ENCODE measurements at regions of chr14 and their contacts with region 1.

Region 1: DNA sequence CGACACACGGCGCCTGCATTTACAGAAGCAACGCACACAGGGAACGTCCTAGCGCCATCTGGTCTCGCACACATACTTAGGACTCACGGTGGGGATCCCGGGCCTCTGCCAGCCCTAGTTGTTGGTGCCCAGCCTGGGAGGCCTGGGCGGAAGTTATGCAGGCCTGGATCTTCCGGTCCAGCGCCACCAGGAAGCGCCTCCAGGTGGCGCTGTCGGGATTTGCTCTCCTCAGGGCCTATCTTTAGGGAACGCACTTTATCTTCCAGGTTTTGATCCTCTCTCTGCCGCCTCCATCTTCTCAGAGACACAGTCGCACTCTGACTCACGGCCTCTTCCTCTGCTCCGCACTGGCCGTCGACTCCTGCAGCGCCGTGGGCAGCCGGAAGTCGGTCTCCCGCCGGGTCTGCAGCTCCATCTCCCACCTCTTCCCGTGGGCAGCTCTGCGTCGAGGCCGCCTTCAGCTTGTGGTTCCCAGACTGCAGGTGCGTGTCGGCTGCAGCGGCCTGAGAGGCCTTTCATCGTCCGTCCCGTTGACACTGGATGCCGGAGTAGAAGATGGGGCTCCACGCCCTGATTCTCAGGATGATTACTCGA is 760.4 kb downstream of the TMEM121 start:
- DNase-seq: peak in 2 of 3 donors; percentile 48
- H3K4me3 ChIP-seq: no peak overlapping the region
- H3K27ac ChIP-seq: no peak overlapping the region
- H3K4me1 ChIP-seq: no peaks in the 10 kb centered on the region
- H3K27me3 ChIP-seq: peaks cover 0 to 2% (median 0%) of the 10 kb centered on the region in 5 experiments

Region 2: DNA sequence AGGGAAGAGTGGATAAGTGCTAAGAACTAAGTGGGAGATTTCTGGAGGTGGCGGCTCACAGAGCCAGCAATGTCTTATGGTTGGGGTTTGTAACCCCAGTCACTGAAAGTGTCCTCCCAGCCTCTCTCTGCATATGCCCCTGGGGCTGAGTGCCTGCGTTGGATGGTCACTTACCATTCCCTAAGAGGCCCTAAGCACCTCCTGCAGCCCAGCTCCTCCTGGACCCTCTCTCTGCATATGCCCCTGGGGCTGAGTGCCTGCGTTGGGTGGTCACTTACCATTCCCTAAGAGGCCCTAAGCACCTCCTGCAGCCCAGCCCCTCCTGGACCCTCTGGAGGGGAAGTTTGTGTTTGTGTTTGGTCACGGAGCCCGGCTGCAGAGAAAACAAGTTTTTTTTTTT is 334.6 kb before region 1 on chr14:
- CTCF ChIA-PET with region 1: no interaction called
- POLR2A ChIA-PET with region 1: no interaction called
- DNase-seq: no peak
- H3K4me3 ChIP-seq: no peak overlapping the region
- H3K27ac ChIP-seq: no peak overlapping the region
- H3K4me1 ChIP-seq: peaks cover 0 to 9% (median 7%) of the 10 kb centered on the region in 4 experiments
- H3K27me3 ChIP-seq: no peaks in the 10 kb centered on the region

Region 3: DNA sequence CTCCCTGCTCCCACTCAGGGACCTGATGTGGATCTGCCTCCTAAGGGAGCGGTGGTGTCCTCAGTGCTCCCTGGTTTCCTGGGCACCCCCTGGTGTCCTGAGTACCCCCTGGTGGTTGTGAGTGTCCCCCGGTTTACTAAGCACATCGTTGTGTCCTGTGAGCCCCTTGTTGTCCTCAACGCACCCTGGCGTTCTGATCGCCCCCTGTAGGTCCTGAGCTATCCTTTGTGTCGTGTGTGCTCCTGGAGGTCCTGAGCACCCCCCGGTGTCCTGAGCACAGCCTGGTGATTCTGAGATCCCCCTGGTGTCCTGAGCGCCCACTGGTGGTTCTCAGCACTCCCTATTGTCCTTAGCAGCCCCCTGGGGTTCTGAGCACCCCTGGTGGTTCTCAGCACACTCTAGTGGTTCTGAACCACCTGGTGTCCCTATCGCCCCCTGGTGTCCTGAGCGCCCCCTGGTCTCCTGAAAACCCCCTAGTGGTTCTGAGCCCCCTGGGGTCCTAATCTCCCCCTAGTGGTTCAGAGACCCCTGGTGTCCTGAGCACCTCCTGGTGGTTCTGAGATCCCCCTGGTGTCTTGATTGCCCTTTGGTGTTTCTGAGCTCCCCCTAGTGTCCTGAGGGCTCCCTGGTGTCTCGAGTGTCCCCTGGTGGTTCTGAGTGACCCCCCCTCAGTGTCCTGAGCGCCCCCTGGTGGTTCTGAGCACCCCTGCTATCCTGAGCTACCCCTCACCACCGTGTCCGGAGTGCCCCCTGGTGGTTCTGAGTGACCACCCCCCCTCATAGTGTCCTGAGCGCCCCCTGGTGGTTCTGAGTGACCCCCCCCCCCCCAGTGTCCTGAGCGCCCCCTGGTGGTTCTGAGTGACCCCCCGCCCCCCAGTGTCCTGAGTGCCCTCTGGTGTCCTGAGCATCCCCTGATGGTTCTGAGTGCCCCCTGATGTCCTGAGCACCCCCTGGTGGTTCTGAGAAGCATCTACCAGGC is 145.3 kb before region 1 on chr14:
- CTCF ChIA-PET with region 1: no interaction called
- POLR2A ChIA-PET with region 1: no interaction called
- DNase-seq: peak; percentile 54 to 76 (median 75)
- H3K4me3 ChIP-seq: no peak overlapping the region
- H3K27ac ChIP-seq: no peak overlapping the region
- H3K4me1 ChIP-seq: peaks cover 0 to 9% (median 0%) of the 10 kb centered on the region in 4 experiments
- H3K27me3 ChIP-seq: no peaks in the 10 kb centered on the region

Region 4: DNA sequence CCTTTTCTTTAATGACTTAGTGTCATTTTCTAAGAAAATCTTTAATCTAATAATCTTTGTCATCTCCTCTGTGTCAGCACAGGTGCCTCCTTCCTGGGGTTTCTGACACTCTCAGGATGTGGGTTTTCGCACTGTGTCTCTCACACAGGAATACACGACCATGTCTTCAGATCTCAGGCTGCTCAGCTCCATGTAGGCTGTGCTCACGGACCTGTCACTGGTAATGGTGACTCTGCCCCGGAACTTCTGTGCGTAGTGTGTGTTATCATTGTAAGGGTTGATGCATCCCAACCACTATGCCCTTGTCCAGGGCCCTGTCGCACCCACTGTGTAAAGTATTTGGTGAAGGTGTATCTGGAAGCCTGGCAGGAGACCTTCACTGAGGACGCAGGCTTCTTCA is 112.6 kb before region 1 on chr14:
- CTCF ChIA-PET with region 1: no interaction called
- POLR2A ChIA-PET with region 1: no interaction called
- DNase-seq: peak in 2 of 3 donors; percentile 28 to 56
- H3K4me3 ChIP-seq: peak overlapping the region in 1 of 7 experiments; percentile 5
- H3K27ac ChIP-seq: no peak overlapping the region
- H3K4me1 ChIP-seq: peaks cover 0 to 3% (median 0%) of the 10 kb centered on the region in 4 experiments
- H3K27me3 ChIP-seq: peaks cover 0 to 12% (median 0%) of the 10 kb centered on the region in 5 experiments

Region 5: GRCh38 chr14:106302661-106303060 is 15.9 kb after region 1 on chr14:
- CTCF ChIA-PET with region 1: interaction called, 15 read pairs
- POLR2A ChIA-PET with region 1: no interaction called
- DNase-seq: peak; percentile 12 to 81 (median 72)
- H3K4me3 ChIP-seq: no peak overlapping the region
- H3K27ac ChIP-seq: no peak overlapping the region
- H3K4me1 ChIP-seq: peaks cover 0 to 54% (median 21%) of the 10 kb centered on the region in 4 experiments
- H3K27me3 ChIP-seq: no peaks in the 10 kb centered on the region

Region 6: DNA sequence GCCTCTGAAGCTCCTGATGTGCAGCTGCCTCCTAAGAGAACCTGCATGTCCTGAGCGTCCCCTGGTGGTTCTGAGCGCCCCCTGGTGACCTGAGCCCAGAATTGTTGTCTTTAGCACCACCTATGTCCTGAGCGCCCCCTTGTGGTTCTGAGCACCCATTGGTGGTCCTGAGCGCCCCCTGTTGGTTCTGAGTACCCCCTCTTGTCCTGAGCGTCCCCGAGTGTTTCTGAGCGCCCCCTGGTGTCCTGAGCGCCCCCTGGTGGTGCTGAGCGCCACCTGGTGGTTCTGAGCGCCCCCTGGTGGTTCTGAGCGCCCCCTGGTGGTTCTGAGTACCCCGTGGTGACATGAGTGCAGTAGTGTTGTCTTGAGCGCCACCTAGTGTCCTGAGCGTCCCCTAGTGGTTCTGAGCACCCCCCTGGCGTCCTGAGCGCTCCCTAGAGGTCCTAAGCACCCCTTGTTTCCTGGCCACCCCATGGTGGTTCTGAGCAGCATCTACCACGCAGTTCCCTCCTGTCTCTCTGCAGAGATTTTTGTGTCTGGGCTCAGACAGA is 22.1 kb after region 1 on chr14:
- CTCF ChIA-PET with region 1: interaction called, 11 read pairs
- POLR2A ChIA-PET with region 1: no interaction called
- DNase-seq: peak; percentile 80 to 92 (median 91)
- H3K4me3 ChIP-seq: no peak overlapping the region
- H3K27ac ChIP-seq: no peak overlapping the region
- H3K4me1 ChIP-seq: peaks cover 0 to 10% (median 5%) of the 10 kb centered on the region in 4 experiments
- H3K27me3 ChIP-seq: peaks cover 0 to under 1% (median 0%) of the 10 kb centered on the region in 5 experiments